ENCODE measurements at regions of chr1 and their contacts with region 1.

Region 1: GRCh38 chr1:171801487-171801891 is 20.0 kb downstream of the METTL13 start:
- DNase-seq: peak in 1 of 6 donors; percentile 26
- ATAC-seq: peak in 3 of 4 donors; percentile 74 to 88 (median 79)
- H3K4me3 ChIP-seq: no peak overlapping the region
- H3K27ac ChIP-seq: no peak overlapping the region
- H3K4me1 ChIP-seq: no peaks in the 10 kb centered on the region
- H3K27me3 ChIP-seq: no peaks in the 10 kb centered on the region
- CTCF ChIP-seq: peak; percentile 40 to 71 (median 64)

Region 2: DNA sequence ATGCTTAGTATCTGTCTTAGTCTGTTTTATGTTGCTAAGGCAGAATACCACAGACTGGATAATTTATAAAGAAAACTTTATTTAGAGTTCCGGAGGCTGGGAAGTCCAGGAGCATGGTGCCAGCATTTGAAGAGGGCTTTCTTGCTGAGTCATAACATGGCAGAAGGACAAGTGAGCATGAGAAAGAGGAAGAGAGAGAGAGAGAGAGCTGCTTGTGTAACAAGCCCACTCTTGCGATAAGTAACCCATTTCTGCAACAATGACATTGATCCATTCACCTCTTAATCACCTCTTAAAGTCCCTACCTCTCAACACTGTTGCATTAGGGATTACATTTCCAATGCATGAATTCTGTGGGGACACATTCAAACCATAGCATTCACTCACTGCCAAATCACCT is 191.1 kb before region 1 on chr1:
- intact Hi-C with region 1: no loop called
- DNase-seq: no peak
- ATAC-seq: peak in 1 of 4 donors; percentile 41
- H3K4me3 ChIP-seq: no peak overlapping the region
- H3K27ac ChIP-seq: no peak overlapping the region
- H3K4me1 ChIP-seq: no peaks in the 10 kb centered on the region
- H3K27me3 ChIP-seq: no peaks in the 10 kb centered on the region
- CTCF ChIP-seq: no peak

Region 3: DNA sequence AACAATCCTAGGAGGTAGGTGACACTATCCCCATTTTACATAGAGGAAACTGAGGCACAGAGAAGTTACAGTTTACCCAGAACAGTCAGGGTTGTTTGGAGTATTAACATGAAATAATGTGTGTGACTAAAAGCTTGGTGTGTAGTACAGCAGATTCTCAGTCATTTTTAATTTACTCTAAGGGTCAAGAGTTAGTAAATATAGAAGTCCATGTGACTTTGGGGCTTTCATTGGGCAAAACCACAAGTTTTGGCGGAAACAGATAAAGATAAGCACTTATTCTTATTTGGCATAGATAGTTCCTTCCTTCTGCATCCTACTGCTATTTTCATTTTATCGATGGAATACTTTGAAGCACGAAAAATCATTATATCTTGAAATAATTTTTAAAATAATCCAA is 168.3 kb after region 1 on chr1:
- intact Hi-C with region 1: loop called in 1 of 3 experiments (anchors 10 kb)
- DNase-seq: no peak
- ATAC-seq: no peak
- H3K4me3 ChIP-seq: no peak overlapping the region
- H3K27ac ChIP-seq: no peak overlapping the region
- H3K4me1 ChIP-seq: no peaks in the 10 kb centered on the region
- H3K27me3 ChIP-seq: no peaks in the 10 kb centered on the region
- CTCF ChIP-seq: no peak

Region 4: GRCh38 chr1:171984850-171985485 is 183.5 kb after region 1 on chr1:
- intact Hi-C with region 1: loop called in 2 of 3 experiments (anchors 5 to 10 kb)
- DNase-seq: no peak
- ATAC-seq: peak; percentile 75 to 87 (median 84)
- H3K4me3 ChIP-seq: no peak overlapping the region
- H3K27ac ChIP-seq: no peak overlapping the region
- H3K4me1 ChIP-seq: peaks cover 0 to 3% (median 0%) of the 10 kb centered on the region in 3 donors
- H3K27me3 ChIP-seq: no peaks in the 10 kb centered on the region
- CTCF ChIP-seq: peak; percentile 39 to 76 (median 54)

Region 5: GRCh38 chr1:171990371-171990770 is 188.9 kb after region 1 on chr1:
- intact Hi-C with region 1: loop called in 2 of 3 experiments (anchors 5 to 10 kb)
- DNase-seq: no peak
- ATAC-seq: no peak
- H3K4me3 ChIP-seq: no peak overlapping the region
- H3K27ac ChIP-seq: no peak overlapping the region
- H3K4me1 ChIP-seq: no peaks in the 10 kb centered on the region
- H3K27me3 ChIP-seq: peaks cover 0 to 2% (median 0%) of the 10 kb centered on the region in 4 donors
- CTCF ChIP-seq: no peak